ENCODE measurements at regions of chr22 and their contacts with region 1.

Region 1: GRCh38 chr22:27348634-27349033 is 452.9 kb downstream of the MN1 start:
- DNase-seq: no peak
- H3K4me3 ChIP-seq: no peak overlapping the region
- CTCF ChIP-seq: no peak

Region 2: DNA sequence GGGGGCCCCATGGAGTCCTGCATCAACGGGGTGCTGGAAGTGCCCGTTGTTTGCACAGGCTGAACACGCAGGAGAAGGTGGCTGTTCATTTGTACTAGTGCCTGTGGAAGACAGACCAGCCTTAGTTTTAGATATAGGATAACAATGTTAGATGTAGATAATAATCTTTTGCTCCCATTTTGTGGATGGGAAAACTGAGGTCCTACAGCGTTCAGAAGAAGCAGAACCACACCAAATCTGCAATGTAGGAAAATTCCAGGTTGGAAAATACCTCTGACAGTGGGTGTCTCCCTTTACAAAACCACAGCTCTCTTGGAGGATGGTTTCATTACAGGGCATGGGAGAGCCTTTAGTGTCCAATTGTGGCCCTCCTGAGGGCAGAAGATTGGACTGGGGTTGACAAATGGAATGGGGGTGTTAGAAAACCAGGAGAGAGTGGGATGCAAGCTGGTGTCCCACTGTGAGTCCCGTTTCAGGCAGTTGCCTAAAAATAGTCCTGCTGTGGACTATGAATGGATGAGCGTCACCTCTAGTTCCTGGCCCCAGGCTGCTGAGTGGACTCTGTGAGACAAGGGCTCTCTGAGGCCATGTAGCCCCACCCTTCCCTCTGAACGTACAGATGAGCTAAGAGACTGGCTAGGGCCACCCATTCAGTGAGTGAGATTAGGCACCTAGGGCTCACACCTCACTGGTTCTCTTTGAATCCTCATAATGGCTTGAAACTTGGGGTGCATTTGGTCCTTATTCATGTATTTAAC is 55.9 kb before region 1 on chr22:
- in situ Hi-C with region 1: no loop called
- DNase-seq: no peak
- H3K4me3 ChIP-seq: no peak overlapping the region
- CTCF ChIP-seq: no peak

Region 3: DNA sequence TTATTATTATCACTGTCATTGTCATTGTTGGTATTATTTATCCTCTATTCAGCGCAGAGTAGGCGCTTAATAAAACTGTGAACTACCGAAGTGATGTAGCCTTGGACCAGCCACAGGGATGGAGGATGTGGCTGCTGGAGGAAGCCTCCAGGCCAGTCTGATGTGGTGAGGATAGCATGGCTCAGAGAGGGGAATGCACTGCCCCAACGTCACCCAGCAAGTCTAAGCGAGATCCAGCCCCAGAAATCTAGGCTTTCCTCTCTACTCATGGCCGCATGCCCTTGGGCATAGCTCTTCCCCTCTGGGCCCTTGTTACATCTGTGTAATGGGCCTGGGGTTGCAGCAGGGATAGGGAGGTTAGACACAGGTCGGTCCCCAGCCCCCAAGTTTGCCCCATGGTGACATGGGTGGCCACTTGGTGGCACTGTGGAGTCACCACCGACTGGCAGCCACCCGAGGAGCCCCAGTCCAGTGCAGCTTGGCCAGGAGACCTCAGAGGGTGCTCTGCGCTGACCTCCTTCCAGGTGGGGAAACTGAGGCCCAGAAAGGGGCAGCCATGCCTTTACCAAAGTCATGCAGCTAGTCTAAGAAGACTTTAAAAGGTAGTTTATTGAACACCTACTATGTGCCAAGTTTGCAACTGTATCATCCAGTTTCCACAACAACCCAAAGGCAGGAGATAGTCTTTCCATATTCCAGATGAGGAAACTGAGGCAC is 57.2 kb after region 1 on chr22:
- in situ Hi-C with region 1: loop called (anchors 10 kb)
- DNase-seq: no peak
- H3K4me3 ChIP-seq: no peak overlapping the region
- CTCF ChIP-seq: peak; percentile 71